ENCODE measurements at regions of chr17 and their contacts with region 1.

Region 1: GRCh38 chr17:42720996-42721583 is 23.8 kb downstream of the EZH1 start:
- DNase-seq: no peak
- H3K4me3 ChIP-seq: no peak overlapping the region
- H3K27ac ChIP-seq: no peak overlapping the region
- H3K4me1 ChIP-seq: no peaks in the 10 kb centered on the region
- H3K27me3 ChIP-seq: no peaks in the 10 kb centered on the region
- CTCF ChIP-seq: peak in 5 of 6 experiments; percentile 46 to 73 (median 68)
- POLR2A ChIP-seq: no peak

Region 2: DNA sequence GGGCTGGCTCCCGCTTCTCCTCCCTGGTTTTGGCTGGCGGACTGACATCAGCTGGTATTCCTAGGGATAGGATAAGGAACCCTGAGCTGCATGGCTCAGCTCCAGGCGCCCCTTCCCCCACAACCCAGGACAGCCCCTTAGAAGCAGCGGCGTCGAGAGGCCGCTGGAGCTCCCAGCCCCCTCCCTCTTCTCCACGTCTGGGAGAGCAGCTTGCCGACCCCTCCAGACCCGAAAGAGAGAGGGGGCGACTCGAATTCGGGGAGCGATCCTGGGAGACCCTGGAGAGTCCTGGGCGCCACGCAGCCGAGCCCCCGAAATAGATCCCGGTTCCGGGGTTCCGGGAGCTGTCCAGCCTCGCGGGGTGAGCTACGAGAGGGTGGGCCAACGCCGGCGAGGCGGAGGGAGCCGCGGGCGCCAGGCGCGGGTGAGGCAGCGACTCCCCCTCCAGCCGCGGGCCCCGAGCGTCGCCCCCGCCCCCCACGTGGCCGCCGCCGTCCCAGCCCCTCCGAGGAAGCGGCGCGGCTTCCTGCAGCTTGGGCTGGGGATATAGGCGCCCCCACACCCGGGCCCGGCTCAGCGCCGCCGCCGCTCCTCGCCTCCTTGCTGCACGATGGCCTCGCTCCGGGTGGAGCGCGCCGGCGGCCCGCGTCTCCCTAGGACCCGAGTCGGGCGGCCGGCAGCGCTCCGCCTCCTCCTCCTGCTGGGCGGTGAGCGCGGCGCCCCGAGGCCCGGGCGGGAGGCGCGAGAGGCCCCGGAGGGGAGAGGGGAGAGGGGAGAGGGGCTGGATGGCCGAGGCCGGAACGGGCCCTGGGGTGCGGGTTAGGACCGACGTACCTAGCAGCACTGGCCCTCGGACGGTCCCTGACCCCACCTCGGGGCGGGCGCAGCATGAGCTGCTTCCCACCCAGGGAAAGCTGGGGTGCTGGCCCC is 39.8 kb after region 1 on chr17 and contains the start of gene RAMP2:
- intact Hi-C with region 1: loop called (anchors 5 kb)
- DNase-seq: peak; percentile 25 to 30
- H3K4me3 ChIP-seq: peak within 1 kb of the TSS in 1 of 3 donors; percentile 54
- H3K27ac ChIP-seq: peak within 1 kb of the TSS; percentile 37 to 79 (median 67)
- H3K4me1 ChIP-seq: peaks cover 5 to 12% of the 10 kb centered on the region in 2 donors
- H3K27me3 ChIP-seq: no peaks in the 10 kb centered on the region
- CTCF ChIP-seq: no peak
- POLR2A ChIP-seq: no peak
- total RNA-seq, gene RAMP2: 18.6 to 55.3 (median 25.7) TPM

Region 3: GRCh38 chr17:42773290-42774035 is 52.4 kb after region 1 on chr17 and contains the start of gene VPS25:
- intact Hi-C with region 1: no loop called
- DNase-seq: peak; percentile 70 to 76
- H3K4me3 ChIP-seq: peak within 1 kb of the TSS; percentile 23 to 96 (median 75)
- H3K27ac ChIP-seq: peak within 1 kb of the TSS; percentile 38 to 66 (median 60)
- H3K4me1 ChIP-seq: peaks cover 9 to 10% of the 10 kb centered on the region in 2 donors
- H3K27me3 ChIP-seq: no peaks in the 10 kb centered on the region
- CTCF ChIP-seq: peak in 1 of 6 experiments; percentile 5
- POLR2A ChIP-seq: peak in 1 of 2 donors; percentile 52
- total RNA-seq, gene VPS25: 38.5 to 71.2 (median 56.3) TPM

Measured in thyroid gland (tissue), 4 donors.